Esophagus squamous epithelium (tissue), 5 donors: ENCODE measurements at regions of chr12 and their contacts with region 1.

Region 1: DNA sequence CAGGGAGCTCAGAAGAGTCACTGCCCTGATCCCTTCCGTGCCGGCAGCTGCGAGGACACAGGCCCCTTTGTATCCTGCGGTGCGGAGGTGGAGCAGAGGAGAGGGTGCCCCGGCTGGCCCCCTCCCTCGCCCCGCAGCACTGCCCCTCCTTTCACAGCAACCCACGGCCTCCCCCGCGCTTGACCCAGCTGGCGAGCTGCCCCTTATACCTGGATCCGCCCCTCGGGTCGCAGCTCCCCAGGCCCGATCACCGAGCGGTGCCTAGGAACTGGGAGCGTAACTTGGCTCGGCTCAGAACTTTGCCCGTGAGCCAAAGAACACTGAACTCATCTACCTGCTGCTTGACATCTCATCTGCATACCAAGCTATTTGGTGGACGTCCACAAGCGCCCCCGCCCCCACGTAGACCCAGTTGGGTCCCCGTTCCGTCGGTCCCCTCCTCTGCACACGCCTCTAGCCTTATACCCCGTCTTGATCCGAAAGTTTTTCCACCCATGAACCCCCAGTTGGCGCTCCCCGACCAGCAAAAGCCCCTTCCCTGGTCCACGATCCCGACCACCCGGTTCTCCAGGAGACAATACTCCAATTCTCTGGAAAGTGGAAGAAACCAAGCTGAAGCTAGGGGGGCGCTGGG is 697 bp upstream of the DNAJC14 start:
- DNase-seq: no peak
- H3K4me3 ChIP-seq: peak overlapping the region; percentile 75 to 99 (median 94)
- H3K27ac ChIP-seq: peak overlapping the region; percentile 93 to 98 (median 96)
- H3K4me1 ChIP-seq: peaks cover 30 to 73% (median 40%) of the 10 kb centered on the region in 3 donors
- H3K27me3 ChIP-seq: no peaks in the 10 kb centered on the region
- CTCF ChIP-seq: no peak
- POLR2A ChIP-seq: no peak

Region 2: GRCh38 chr12:55926738-55927587 is 96.9 kb after region 1 on chr12:
- intact Hi-C with region 1: loop called (anchors 5 kb)
- DNase-seq: peak; percentile 56
- H3K4me3 ChIP-seq: peak overlapping the region; percentile 59 to 95 (median 78)
- H3K27ac ChIP-seq: peak overlapping the region; percentile 92 to 100 (median 97)
- H3K4me1 ChIP-seq: peaks cover 25 to 75% (median 43%) of the 10 kb centered on the region in 3 donors
- H3K27me3 ChIP-seq: no peaks in the 10 kb centered on the region
- CTCF ChIP-seq: peak; percentile 48 to 91 (median 65)
- POLR2A ChIP-seq: peak in 2 of 4 donors; percentile 17 to 43

Region 3: DNA sequence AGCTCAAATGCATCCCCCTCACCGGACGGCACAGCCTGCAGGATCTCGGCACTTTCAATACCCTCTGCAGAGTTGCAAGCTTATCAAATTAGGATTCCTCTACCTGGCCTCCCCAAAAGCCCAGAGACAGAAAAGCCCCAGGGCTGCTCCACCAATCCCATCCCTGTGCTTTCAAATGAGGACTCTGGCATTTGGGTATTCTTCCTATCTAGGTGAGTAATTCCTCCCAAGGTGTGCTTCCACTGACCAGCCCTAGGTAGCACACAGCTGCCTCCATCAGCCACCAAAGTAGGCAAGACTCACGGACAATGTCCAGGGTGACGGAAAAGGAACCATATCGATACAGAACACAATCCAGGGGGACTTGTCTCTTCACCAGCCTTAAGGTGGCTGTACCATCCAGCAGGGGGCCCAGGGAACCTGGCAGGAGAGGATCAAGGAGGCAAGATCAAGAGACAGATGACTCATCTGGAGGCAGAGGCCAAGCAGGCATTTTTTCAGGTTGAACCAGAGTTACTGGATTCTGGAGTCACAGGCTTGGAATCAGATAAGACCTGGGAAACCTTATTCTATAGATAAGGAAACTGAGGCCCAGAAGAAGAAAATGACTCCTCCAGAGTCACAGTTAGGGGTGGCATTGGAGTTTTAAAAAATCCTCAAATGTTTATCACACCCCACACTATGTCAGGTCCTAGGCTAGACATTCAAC is 125.9 kb after region 1 on chr12:
- intact Hi-C with region 1: no loop called
- DNase-seq: no peak
- H3K4me3 ChIP-seq: no peak overlapping the region
- H3K27ac ChIP-seq: peak overlapping the region; percentile 9 to 77 (median 57)
- H3K4me1 ChIP-seq: peaks cover 12 to 46% (median 13%) of the 10 kb centered on the region in 3 donors
- H3K27me3 ChIP-seq: no peaks in the 10 kb centered on the region
- CTCF ChIP-seq: peak in 5 of 6 experiments; percentile 32 to 71 (median 56)
- POLR2A ChIP-seq: no peak